CD4-positive, alpha-beta memory T cell (primary cell): ENCODE measurements at regions of chr2 and their contacts with region 1.

Region 1: DNA sequence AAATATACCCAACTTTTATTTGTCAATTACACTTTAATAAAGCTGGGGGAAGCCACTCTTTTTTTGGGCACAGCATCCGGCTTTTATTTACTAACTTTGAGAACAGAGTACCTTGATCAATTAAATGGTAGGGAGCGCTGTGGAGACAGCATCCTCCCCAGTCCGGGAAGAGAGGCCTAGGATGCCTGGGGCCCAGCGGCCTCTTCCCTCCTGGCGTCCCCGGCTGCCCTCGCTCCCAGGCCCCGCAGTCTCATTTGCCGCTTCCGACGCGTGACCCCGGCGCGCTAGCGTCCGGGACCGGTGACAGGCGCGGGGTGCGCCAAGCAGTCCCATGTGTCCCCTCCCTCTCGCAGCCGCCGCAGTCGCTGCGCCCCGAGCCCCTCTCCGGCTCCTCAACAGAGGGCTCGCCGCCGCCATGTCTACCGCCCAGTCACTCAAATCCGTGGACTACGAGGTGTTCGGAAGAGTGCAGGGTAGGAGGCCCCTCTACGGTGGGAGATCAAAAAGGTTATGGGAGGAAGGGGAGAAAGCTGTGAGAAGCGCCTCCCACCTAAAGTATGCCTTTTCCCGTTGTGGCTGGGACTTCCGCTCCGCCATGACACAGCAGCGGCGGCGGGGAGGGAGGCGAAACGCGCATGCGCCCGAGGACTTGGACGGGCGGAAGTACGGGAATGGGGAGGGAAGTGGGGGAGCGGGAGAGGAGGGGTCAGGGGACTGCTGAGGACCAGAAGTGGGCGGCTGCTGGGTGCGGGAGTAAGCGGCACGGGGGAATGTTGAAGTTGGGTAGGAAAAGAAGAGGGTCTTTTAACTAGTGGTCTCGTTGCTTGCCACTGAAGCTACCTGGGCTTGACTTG is at the start of gene ACYP2:
- DNase-seq: peak; percentile 89 to 92 (median 89)
- H3K4me3 ChIP-seq: peak within 1 kb of the TSS; percentile 77 to 83
- H3K4me3 Mint-ChIP-seq: peak within 1 kb of the TSS; percentile 94 to 99 (median 97)
- H3K27ac ChIP-seq: peak within 1 kb of the TSS; percentile 93
- H3K27ac Mint-ChIP-seq: peak within 1 kb of the TSS; percentile 99 to 100 (median 99)
- H3K4me1 ChIP-seq: peaks cover 17% of the 10 kb centered on the region
- H3K4me1 Mint-ChIP-seq: peaks cover 12 to 27% (median 16%) of the 10 kb centered on the region in 4 donors
- H3K27me3 ChIP-seq: no peaks in the 10 kb centered on the region
- H3K27me3 Mint-ChIP-seq: no peaks in the 10 kb centered on the region
- total RNA-seq, gene ACYP2: 13.1 to 16.9 TPM

Region 2: GRCh38 chr2:53786705-53787612 is 328.6 kb before region 1 on chr2 and contains the starts of genes ASB3 and ERLEC1:
- CTCF ChIA-PET with region 1: no interaction called
- POLR2A ChIA-PET with region 1: interaction called, 3 read pairs
- intact Hi-C with region 1: loop called (anchors 2 kb)
- DNase-seq: peak; percentile 85 to 90 (median 87)
- H3K4me3 ChIP-seq: peak within 1 kb of the TSS; percentile 80 to 96
- H3K4me3 Mint-ChIP-seq: peak within 1 kb of the TSS; percentile 91 to 100 (median 96)
- H3K27ac ChIP-seq: peak within 1 kb of the TSS; percentile 86
- H3K27ac Mint-ChIP-seq: peak within 1 kb of the TSS; percentile 90 to 99 (median 95)
- H3K4me1 ChIP-seq: peaks cover 49% of the 10 kb centered on the region
- H3K4me1 Mint-ChIP-seq: peaks cover 36 to 73% (median 52%) of the 10 kb centered on the region in 4 donors
- H3K27me3 ChIP-seq: no peaks in the 10 kb centered on the region
- H3K27me3 Mint-ChIP-seq: no peaks in the 10 kb centered on the region
- total RNA-seq, gene ASB3: 40.1 to 43.5 TPM
- total RNA-seq, gene ERLEC1: 32.4 to 33.6 TPM

Region 3: GRCh38 chr2:54092940-54093339 is 22.6 kb before region 1 on chr2:
- CTCF ChIA-PET with region 1: interaction called, 3 read pairs
- POLR2A ChIA-PET with region 1: interaction called, 21 read pairs
- intact Hi-C with region 1: no loop called
- DNase-seq: peak; percentile 34 to 48 (median 44)
- H3K4me3 ChIP-seq: no peak overlapping the region
- H3K4me3 Mint-ChIP-seq: peak overlapping the region; percentile 10 to 80 (median 62)
- H3K27ac ChIP-seq: peak overlapping the region; percentile 51
- H3K27ac Mint-ChIP-seq: peak overlapping the region; percentile 64 to 96 (median 85)
- H3K4me1 ChIP-seq: peaks cover 31% of the 10 kb centered on the region
- H3K4me1 Mint-ChIP-seq: peaks cover 20 to 38% (median 30%) of the 10 kb centered on the region in 4 donors
- H3K27me3 ChIP-seq: no peaks in the 10 kb centered on the region
- H3K27me3 Mint-ChIP-seq: no peaks in the 10 kb centered on the region

Region 4: DNA sequence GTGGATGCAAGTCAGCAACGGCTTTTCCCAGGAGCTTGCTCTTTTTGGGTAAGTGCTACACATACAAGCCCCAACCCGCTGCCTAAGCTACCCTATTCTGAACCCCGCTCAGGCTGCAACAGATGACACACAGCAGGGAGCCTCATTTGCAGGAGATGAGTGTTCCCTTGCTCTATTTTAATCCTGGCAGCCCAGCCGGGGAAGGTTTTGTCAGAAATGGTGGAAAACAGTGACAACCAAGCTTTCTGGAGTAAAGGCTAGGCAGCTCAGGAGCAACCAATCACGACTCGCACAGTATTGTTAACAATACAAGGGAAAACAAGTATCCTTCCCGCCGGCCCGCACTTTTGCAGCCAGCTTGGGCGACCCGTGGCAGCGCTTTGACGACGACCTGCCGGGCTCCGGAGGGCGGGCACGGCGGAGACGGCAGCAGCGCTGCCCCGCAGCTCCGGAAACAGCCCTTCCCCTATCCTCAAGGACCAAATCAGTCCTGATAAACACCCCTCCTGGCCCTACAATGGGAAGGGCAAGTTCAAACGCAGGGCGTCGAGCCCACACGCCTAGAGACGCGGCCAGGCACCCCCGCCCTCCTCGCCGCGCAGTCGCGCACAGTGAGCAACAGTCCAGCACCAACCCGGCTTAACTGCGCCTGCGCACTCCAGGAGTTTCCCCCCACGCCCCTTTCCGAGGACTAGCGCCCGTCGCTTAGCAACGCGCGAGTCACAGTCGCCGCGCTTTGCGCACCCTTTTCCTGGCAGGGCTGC is 214.8 kb after region 1 on chr2:
- CTCF ChIA-PET with region 1: no interaction called
- POLR2A ChIA-PET with region 1: interaction called, 4 read pairs
- intact Hi-C with region 1: loop called (anchors 10 kb)
- DNase-seq: peak; percentile 81 to 87 (median 86)
- H3K4me3 ChIP-seq: peak overlapping the region; percentile 59 to 74
- H3K4me3 Mint-ChIP-seq: peak overlapping the region; percentile 87 to 94 (median 91)
- H3K27ac ChIP-seq: no peak overlapping the region
- H3K27ac Mint-ChIP-seq: peak overlapping the region; percentile 14 to 92 (median 84)
- H3K4me1 ChIP-seq: peaks cover 14% of the 10 kb centered on the region
- H3K4me1 Mint-ChIP-seq: peaks cover 4 to 17% (median 13%) of the 10 kb centered on the region in 4 donors
- H3K27me3 ChIP-seq: no peaks in the 10 kb centered on the region
- H3K27me3 Mint-ChIP-seq: peaks cover 3 to 13% of the 10 kb centered on the region in 2 donors